B cell (primary cell): ENCODE measurements at regions of chr11 and their contacts with region 1.

Region 1: GRCh38 chr11:72736452-72737069 is 15.6 kb downstream of the ARAP1 start:
- DNase-seq: peak; percentile 87
- ATAC-seq: peak; percentile 42
- H3K4me3 ChIP-seq: peak overlapping the region in 4 of 5 experiments; percentile 13 to 67 (median 42)
- H3K4me3 Mint-ChIP-seq: peak overlapping the region; percentile 86
- H3K27ac ChIP-seq: peak overlapping the region; percentile 97 to 99
- H3K27ac Mint-ChIP-seq: peak overlapping the region; percentile 99
- H3K4me1 ChIP-seq: peaks cover 76 to 87% of the 10 kb centered on the region in 2 donors
- H3K4me1 Mint-ChIP-seq: peaks cover 83% of the 10 kb centered on the region
- H3K27me3 ChIP-seq: no peaks in the 10 kb centered on the region
- H3K27me3 Mint-ChIP-seq: no peaks in the 10 kb centered on the region
- CTCF ChIP-seq: no peak

Region 2: GRCh38 chr11:72676861-72677341 is 59.7 kb before region 1 on chr11:
- CTCF ChIA-PET with region 1: no interaction called
- POLR2A ChIA-PET with region 1: no interaction called
- intact Hi-C with region 1: no loop called
- DNase-seq: peak; percentile 66
- ATAC-seq: peak; percentile 78
- H3K4me3 ChIP-seq: no peak overlapping the region
- H3K4me3 Mint-ChIP-seq: no peak overlapping the region
- H3K27ac ChIP-seq: no peak overlapping the region
- H3K27ac Mint-ChIP-seq: no peak overlapping the region
- H3K4me1 ChIP-seq: peaks cover 23 to 45% of the 10 kb centered on the region in 2 donors
- H3K4me1 Mint-ChIP-seq: peaks cover 20% of the 10 kb centered on the region
- H3K27me3 ChIP-seq: peaks cover 0 to 48% (median 38%) of the 10 kb centered on the region in 4 experiments
- H3K27me3 Mint-ChIP-seq: peaks cover 37% of the 10 kb centered on the region
- CTCF ChIP-seq: no peak

Region 3: DNA sequence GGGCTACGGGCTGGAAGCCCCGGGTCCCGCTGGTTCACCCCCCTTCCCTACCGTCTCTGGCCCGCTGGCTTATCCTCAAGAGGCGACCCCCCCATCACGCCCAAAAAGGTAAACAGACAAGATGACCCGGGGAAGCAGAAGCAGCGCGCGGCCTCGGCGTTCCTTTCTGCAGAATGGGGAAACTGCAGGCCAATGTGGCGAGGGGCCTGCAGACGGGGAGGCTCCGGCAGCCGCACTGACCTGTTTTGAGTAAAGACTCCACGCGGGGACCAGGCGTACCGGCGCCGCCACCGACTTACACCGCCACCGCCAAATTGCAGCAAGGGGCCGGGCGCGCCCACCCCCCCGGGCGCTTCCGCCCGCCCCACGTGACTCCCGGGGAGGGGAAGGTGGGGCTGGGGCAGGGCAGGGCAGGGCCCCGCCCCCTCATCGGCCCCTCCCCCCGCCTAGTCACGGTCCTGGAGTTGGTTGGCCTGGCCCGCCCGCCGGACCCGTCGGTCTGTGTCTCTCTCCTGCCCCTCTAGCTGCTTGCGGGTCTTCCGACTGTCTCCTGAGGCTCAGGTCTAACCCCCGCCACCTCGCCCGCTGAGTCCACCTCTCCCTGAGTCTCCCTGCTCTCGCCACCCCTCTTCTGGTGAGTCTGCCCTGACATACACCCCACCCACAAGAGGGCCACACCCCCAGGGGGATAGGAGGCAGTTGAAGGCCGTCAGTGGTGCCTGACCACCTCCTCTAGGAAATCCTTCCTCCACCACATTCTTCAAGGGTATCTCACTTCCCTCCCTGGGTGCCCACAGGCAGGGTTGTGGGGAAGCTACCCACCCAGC is 15.7 kb after region 1 on chr11 and contains the start of gene ARAP1:
- CTCF ChIA-PET with region 1: interaction called, 4 read pairs
- POLR2A ChIA-PET with region 1: interaction called, 4 read pairs
- intact Hi-C with region 1: loop called (anchors 1 kb)
- DNase-seq: peak; percentile 87
- ATAC-seq: peak; percentile 91
- H3K4me3 ChIP-seq: peak within 1 kb of the TSS; percentile 63 to 93 (median 82)
- H3K4me3 Mint-ChIP-seq: peak within 1 kb of the TSS; percentile 99
- H3K27ac ChIP-seq: peak within 1 kb of the TSS; percentile 65 to 79
- H3K27ac Mint-ChIP-seq: peak within 1 kb of the TSS; percentile 96
- H3K4me1 ChIP-seq: peaks cover 42 to 53% of the 10 kb centered on the region in 2 donors
- H3K4me1 Mint-ChIP-seq: peaks cover 45% of the 10 kb centered on the region
- H3K27me3 ChIP-seq: no peaks in the 10 kb centered on the region
- H3K27me3 Mint-ChIP-seq: no peaks in the 10 kb centered on the region
- CTCF ChIP-seq: peak; percentile 12
- total RNA-seq, gene ARAP1: 233 and 242 TPM in 2 replicates

Region 4: GRCh38 chr11:72771507-72771906 is 34.9 kb after region 1 on chr11:
- CTCF ChIA-PET with region 1: no interaction called
- POLR2A ChIA-PET with region 1: no interaction called
- intact Hi-C with region 1: no loop called
- DNase-seq: no peak
- ATAC-seq: no peak
- H3K4me3 ChIP-seq: no peak overlapping the region
- H3K4me3 Mint-ChIP-seq: no peak overlapping the region
- H3K27ac ChIP-seq: no peak overlapping the region
- H3K27ac Mint-ChIP-seq: no peak overlapping the region
- H3K4me1 ChIP-seq: no peaks in the 10 kb centered on the region
- H3K4me1 Mint-ChIP-seq: peaks cover 6% of the 10 kb centered on the region
- H3K27me3 ChIP-seq: no peaks in the 10 kb centered on the region
- H3K27me3 Mint-ChIP-seq: no peaks in the 10 kb centered on the region
- CTCF ChIP-seq: no peak

Region 5: GRCh38 chr11:73384872-73385689 is 648.5 kb after region 1 on chr11:
- CTCF ChIA-PET with region 1: no interaction called
- POLR2A ChIA-PET with region 1: no interaction called
- intact Hi-C with region 1: loop called (anchors 5 kb)
- DNase-seq: peak; percentile 96
- ATAC-seq: peak; percentile 69
- H3K4me3 ChIP-seq: peak overlapping the region in 4 of 5 experiments; percentile 31 to 58 (median 42)
- H3K4me3 Mint-ChIP-seq: peak overlapping the region; percentile 100
- H3K27ac ChIP-seq: peak overlapping the region; percentile 98
- H3K27ac Mint-ChIP-seq: peak overlapping the region; percentile 99
- H3K4me1 ChIP-seq: peaks cover 100% of the 10 kb centered on the region in 2 donors
- H3K4me1 Mint-ChIP-seq: peaks cover 99% of the 10 kb centered on the region
- H3K27me3 ChIP-seq: no peaks in the 10 kb centered on the region
- H3K27me3 Mint-ChIP-seq: no peaks in the 10 kb centered on the region
- CTCF ChIP-seq: no peak